PC-9 (cell line): ENCODE measurements at regions of chr1 and their contacts with region 1.

Region 1: GRCh38 chr1:89974701-89975470 is 20.0 kb upstream of the ZNF326 start:
- DNase-seq: peak; percentile 85 to 99
- H3K4me3 ChIP-seq: peak overlapping the region; percentile 48
- H3K27ac ChIP-seq: peak overlapping the region; percentile 99
- H3K4me1 ChIP-seq: peaks cover 67% of the 10 kb centered on the region
- H3K27me3 ChIP-seq: no peaks in the 10 kb centered on the region
- CTCF ChIP-seq: 0 out of 2 replicates have a peak, but pooled peaks have one; percentile 21

Region 2: DNA sequence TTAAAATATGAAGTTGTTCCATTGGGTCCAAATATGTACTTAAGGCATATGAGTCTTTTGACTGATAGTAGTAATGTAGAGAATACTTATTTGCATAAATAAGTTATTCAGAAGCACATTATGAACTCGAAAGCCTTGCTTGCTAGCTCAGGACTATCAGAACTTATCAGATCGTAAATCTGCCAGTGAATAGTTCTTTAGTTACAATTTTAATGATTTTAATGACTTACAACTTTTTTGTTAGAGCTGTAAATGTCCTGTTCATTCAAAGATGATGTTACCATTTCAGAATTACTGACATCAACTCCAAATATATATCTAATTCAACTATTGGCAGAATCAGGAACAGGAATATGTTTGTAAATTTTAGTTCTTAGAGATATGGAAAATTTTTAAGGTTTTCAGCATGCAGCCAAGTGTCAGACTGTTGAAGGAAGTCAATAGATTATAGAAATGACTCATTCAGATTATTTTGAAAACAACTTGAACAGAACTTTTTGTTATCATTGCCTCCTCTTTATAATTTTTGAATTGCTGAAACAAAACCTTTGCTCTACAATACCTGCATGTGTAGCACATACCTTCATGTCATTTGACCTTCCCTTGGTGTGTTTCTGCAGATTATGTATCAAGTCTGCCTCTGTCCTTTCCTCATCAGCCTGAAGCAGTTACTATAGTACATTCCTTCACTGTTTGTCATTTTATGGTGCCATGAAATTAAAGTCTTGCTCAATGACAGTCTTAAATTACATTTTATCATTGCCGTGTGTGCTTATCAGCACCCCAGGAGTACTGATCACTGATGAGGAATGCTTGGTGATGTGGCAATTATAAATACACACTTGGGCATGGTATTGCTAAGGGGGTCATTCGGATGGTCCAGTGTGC is 109.1 kb before region 1 on chr1:
- CTCF ChIA-PET with region 1: no interaction called
- POLR2A ChIA-PET with region 1: no interaction called
- intact Hi-C with region 1: loop called (anchors 1 kb)
- DNase-seq: peak; percentile 28 to 100
- H3K4me3 ChIP-seq: peak overlapping the region; percentile 16; the same call in 1 of the 2 replicates
- H3K27ac ChIP-seq: peak overlapping the region; percentile 91
- H3K4me1 ChIP-seq: peaks cover 65% of the 10 kb centered on the region
- H3K27me3 ChIP-seq: no peaks in the 10 kb centered on the region
- CTCF ChIP-seq: no peak

Region 3: GRCh38 chr1:89890085-89890752 is 84.7 kb before region 1 on chr1:
- CTCF ChIA-PET with region 1: no interaction called
- POLR2A ChIA-PET with region 1: interaction called, 4 read pairs
- intact Hi-C with region 1: loop called (anchors 1 kb)
- DNase-seq: peak; percentile 88 to 100
- H3K4me3 ChIP-seq: peak overlapping the region; percentile 14; the same call in 1 of the 2 replicates
- H3K27ac ChIP-seq: peak overlapping the region; percentile 94
- H3K4me1 ChIP-seq: peaks cover 93% of the 10 kb centered on the region
- H3K27me3 ChIP-seq: no peaks in the 10 kb centered on the region
- CTCF ChIP-seq: no peak

Region 4: DNA sequence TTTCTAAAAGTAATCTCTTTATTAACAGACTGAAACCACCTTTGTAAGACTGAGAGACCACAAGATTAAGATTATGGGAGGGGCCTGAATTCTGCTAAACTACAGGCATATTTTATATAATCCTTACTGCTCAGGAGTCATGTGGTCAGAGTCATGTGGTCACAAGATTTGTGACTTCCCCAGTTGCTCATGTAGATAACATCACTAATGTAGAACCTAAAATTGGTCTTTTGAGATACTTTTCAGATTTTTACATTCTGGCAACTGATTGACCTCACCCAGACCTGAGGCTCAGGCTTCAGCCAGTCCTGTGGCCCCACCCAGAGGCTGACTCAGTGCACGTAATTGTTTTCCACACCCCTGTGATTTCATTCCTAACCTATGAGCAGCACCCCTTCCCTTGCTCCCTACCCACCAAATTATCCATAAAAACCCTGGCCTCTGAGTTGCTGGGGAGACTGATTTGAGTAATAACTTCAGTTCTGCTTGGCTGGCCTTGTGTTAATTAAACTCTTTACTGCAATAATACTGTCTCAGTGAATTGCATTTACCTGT is 21.7 kb before region 1 on chr1:
- CTCF ChIA-PET with region 1: no interaction called
- POLR2A ChIA-PET with region 1: interaction called, 14 read pairs
- intact Hi-C with region 1: loop called (anchors 1 kb)
- DNase-seq: peak; percentile 83 to 98
- H3K4me3 ChIP-seq: no peak overlapping the region
- H3K27ac ChIP-seq: peak overlapping the region; percentile 94
- H3K4me1 ChIP-seq: peaks cover 73% of the 10 kb centered on the region
- H3K27me3 ChIP-seq: no peaks in the 10 kb centered on the region
- CTCF ChIP-seq: no peak

Region 5: DNA sequence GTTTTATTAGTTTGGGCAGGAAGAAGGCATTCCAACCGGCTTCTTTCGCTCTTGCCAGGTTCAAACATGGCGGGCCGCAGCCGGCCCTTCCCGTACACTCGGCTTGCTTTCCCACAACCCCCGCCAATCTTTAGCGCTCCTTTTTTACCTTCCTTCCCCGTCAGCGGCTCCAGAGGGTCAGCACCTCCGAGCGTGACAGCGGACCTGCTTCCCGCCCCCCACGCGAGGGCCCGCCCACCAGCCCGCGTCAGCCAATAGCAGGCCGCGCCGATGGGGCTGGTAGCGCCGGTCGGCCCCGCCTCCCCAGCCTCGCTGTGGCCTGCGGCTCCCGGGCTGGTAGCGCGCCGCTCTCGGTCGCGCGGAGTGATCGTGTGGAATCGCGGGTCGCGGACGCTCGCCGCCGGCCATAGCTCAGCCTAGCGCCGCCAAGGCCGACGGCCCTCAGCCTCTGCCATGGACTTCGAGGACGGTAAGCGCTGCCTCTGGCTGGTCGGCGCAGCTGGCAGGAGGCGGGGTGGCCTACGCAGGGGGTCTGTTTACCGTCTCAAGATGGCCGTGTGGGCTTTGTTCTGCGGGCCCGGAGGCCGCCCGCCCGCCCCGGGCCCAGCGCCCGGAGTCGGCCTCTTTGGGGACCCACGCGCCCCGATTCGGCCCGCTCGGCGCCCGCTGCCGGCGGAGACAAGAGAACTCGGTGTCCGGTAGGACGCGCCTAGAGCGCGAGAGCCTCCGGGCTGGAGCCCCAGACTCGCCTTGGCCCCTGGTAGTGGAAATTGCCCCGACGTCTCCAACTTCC is 20.1 kb after region 1 on chr1 and contains the start of gene ZNF326:
- CTCF ChIA-PET with region 1: interaction called, 16 read pairs
- POLR2A ChIA-PET with region 1: interaction called, 4 read pairs
- intact Hi-C with region 1: no loop called
- DNase-seq: peak; percentile 97 to 98
- H3K4me3 ChIP-seq: peak within 1 kb of the TSS; percentile 70
- H3K27ac ChIP-seq: peak within 1 kb of the TSS; percentile 87
- H3K4me1 ChIP-seq: peaks cover 78% of the 10 kb centered on the region
- H3K27me3 ChIP-seq: no peaks in the 10 kb centered on the region
- CTCF ChIP-seq: no peak; the same call in 1 of the 2 replicates
- total RNA-seq, gene ZNF326: 23.2 and 26.2 TPM in 2 replicates

Region 6: GRCh38 chr1:90964444-90965035 is 989.7 kb after region 1 on chr1:
- CTCF ChIA-PET with region 1: no interaction called
- POLR2A ChIA-PET with region 1: no interaction called
- intact Hi-C with region 1: no loop called
- DNase-seq: no peak
- H3K4me3 ChIP-seq: no peak overlapping the region
- H3K27ac ChIP-seq: peak overlapping the region; percentile 27; the same call in 1 of the 2 replicates
- H3K4me1 ChIP-seq: peaks cover 15% of the 10 kb centered on the region
- H3K27me3 ChIP-seq: no peaks in the 10 kb centered on the region
- CTCF ChIP-seq: peak; percentile 76